SK-N-SH (cell line): ENCODE measurements at regions of chr1 and their contacts with region 1.

Region 1: GRCh38 chr1:150922519-150922975 is 3.6 kb upstream of the SETDB1 start:
- DNase-seq: peak; percentile 74
- H3K4me3 ChIP-seq: no peak overlapping the region; a peak in 1 of 4 replicates
- H3K27ac ChIP-seq: peak overlapping the region in 1 of 2 experiments; percentile 33; a peak in 1 of 4 replicates
- H3K4me1 ChIP-seq: peaks cover 5 to 13% of the 10 kb centered on the region in 2 experiments; a peak in 2 of 4 replicates
- H3K27me3 ChIP-seq: no peaks in the 10 kb centered on the region
- CTCF ChIP-seq: peak; percentile 81
- EP300 ChIP-seq: no peak
- RAD21 ChIP-seq: peak; percentile 79

Region 2: GRCh38 chr1:150893071-150893913 is 29.3 kb before region 1 on chr1:
- CTCF ChIA-PET with region 1: interaction called, 11 read pairs
- POLR2A ChIA-PET with region 1: no interaction called
- DNase-seq: no peak
- H3K4me3 ChIP-seq: no peak overlapping the region
- H3K27ac ChIP-seq: no peak overlapping the region
- H3K4me1 ChIP-seq: peaks cover 0 to 2% of the 10 kb centered on the region in 2 experiments; a peak in 1 of 4 replicates
- H3K27me3 ChIP-seq: no peaks in the 10 kb centered on the region
- CTCF ChIP-seq: no peak
- EP300 ChIP-seq: no peak
- RAD21 ChIP-seq: no peak

Region 3: GRCh38 chr1:150906341-150906740 is 16.2 kb before region 1 on chr1:
- CTCF ChIA-PET with region 1: interaction called, 10 read pairs
- POLR2A ChIA-PET with region 1: no interaction called
- DNase-seq: no peak
- H3K4me3 ChIP-seq: no peak overlapping the region
- H3K27ac ChIP-seq: no peak overlapping the region
- H3K4me1 ChIP-seq: no peaks in the 10 kb centered on the region
- H3K27me3 ChIP-seq: no peaks in the 10 kb centered on the region
- CTCF ChIP-seq: no peak
- EP300 ChIP-seq: no peak
- RAD21 ChIP-seq: no peak

Region 4: DNA sequence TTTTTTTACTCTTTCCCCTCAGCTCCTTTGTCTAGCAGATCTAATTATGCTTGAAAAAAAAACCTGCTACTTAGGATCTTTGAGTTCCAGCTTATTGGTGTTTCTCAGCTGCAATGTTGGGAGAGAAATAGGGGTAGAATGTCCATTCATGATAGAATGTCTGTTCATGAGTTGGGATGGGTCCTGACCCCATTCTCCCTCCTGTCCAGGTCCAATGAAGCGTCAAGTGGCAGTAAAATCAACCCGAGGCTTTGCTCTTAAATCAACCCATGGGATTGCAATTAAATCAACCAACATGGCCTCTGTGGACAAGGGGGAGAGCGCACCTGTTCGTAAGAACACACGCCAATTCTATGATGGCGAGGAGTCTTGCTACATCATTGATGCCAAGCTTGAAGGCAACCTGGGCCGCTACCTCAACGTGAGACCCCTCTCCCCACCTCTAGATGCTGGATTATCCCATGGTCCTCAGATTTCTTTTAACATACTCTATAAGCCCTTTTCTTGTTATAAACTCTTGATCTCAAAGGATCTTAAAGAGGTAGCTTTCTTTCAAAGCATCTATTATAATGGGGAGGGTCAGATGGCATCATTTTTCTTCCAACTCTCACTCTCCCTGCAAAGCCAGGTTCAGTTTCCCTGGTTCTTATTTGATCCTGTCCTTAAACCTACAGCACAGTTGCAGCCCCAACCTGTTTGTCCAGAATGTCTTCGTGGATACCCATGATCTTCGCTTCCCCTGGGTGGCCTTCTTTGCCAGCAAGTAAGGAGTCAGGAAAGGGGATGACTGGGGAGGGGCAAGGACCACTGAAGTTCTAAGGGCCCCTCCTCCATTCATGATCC is 41.0 kb after region 1 on chr1:
- CTCF ChIA-PET with region 1: no interaction called
- POLR2A ChIA-PET with region 1: no interaction called
- DNase-seq: no peak
- H3K4me3 ChIP-seq: no peak overlapping the region
- H3K27ac ChIP-seq: no peak overlapping the region
- H3K4me1 ChIP-seq: no peaks in the 10 kb centered on the region
- H3K27me3 ChIP-seq: no peaks in the 10 kb centered on the region
- CTCF ChIP-seq: no peak
- EP300 ChIP-seq: no peak
- RAD21 ChIP-seq: no peak

Region 5: DNA sequence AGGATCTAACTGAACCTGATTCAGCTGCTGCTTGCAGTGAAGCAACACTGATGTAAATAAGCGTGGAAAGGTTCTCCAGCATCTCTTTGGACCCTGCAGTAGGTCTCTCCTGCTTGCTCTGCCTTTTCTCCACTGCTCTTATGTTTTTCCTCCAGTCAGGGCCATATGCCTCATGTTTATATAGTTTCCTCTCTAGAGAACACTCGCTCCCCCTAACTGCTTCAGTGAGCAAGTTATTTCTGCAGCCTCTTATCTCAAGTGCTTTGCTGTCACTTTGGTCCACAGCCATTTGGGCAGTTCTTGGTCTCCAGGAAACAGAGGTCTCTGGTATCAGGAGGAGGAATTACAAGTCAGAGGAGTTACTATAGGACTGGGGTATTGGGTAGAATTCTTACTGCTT is 91.0 kb after region 1 on chr1:
- CTCF ChIA-PET with region 1: no interaction called
- POLR2A ChIA-PET with region 1: no interaction called
- DNase-seq: no peak
- H3K4me3 ChIP-seq: no peak overlapping the region
- H3K27ac ChIP-seq: no peak overlapping the region; a peak in 1 of 4 replicates
- H3K4me1 ChIP-seq: peaks cover 4 to 6% of the 10 kb centered on the region in 2 experiments; a peak in 1 of 4 replicates
- H3K27me3 ChIP-seq: no peaks in the 10 kb centered on the region
- CTCF ChIP-seq: no peak
- EP300 ChIP-seq: no peak
- RAD21 ChIP-seq: no peak